Left lung (tissue), 14 donors: ENCODE measurements at regions of chr5 and their contacts with region 1.

Region 1: GRCh38 chr5:175444060-175444904 is at the start of gene DRD1:
- DNase-seq: peak in 3 of 4 donors; percentile 36 to 89 (median 51)
- ATAC-seq: peak; percentile 92
- H3K4me3 ChIP-seq: peak within 1 kb of the TSS; percentile 20 to 24
- H3K27ac ChIP-seq: no peak within 1 kb of the TSS
- H3K4me1 ChIP-seq: peaks cover 5 to 15% of the 10 kb centered on the region in 2 donors
- H3K27me3 ChIP-seq: peaks cover 22 to 96% of the 10 kb centered on the region in 2 donors
- CTCF ChIP-seq: peak; percentile 67 to 78
- polyA plus RNA-seq, gene DRD1: 0.09 to 0.35 (median 0.13) TPM

Region 2: GRCh38 chr5:174951146-174951780 is 493.0 kb before region 1 on chr5:
- intact Hi-C with region 1: loop called in 1 of 2 experiments (anchors 5 kb)
- DNase-seq: peak in 3 of 4 donors; percentile 40 to 89 (median 63)
- ATAC-seq: peak; percentile 96
- H3K4me3 ChIP-seq: no peak overlapping the region
- H3K27ac ChIP-seq: no peak overlapping the region
- H3K4me1 ChIP-seq: no peaks in the 10 kb centered on the region
- H3K27me3 ChIP-seq: peaks cover 0 to 12% of the 10 kb centered on the region in 2 donors
- CTCF ChIP-seq: peak; percentile 75 to 77

Region 3: GRCh38 chr5:175246242-175246888 is 197.9 kb before region 1 on chr5:
- intact Hi-C with region 1: no loop called
- DNase-seq: peak in 1 of 4 donors; percentile 51
- ATAC-seq: peak; percentile 83
- H3K4me3 ChIP-seq: no peak overlapping the region
- H3K27ac ChIP-seq: peak overlapping the region in 1 of 2 donors; percentile 43
- H3K4me1 ChIP-seq: peaks cover 0 to 7% of the 10 kb centered on the region in 2 donors
- H3K27me3 ChIP-seq: no peaks in the 10 kb centered on the region
- CTCF ChIP-seq: no peak

Region 4: DNA sequence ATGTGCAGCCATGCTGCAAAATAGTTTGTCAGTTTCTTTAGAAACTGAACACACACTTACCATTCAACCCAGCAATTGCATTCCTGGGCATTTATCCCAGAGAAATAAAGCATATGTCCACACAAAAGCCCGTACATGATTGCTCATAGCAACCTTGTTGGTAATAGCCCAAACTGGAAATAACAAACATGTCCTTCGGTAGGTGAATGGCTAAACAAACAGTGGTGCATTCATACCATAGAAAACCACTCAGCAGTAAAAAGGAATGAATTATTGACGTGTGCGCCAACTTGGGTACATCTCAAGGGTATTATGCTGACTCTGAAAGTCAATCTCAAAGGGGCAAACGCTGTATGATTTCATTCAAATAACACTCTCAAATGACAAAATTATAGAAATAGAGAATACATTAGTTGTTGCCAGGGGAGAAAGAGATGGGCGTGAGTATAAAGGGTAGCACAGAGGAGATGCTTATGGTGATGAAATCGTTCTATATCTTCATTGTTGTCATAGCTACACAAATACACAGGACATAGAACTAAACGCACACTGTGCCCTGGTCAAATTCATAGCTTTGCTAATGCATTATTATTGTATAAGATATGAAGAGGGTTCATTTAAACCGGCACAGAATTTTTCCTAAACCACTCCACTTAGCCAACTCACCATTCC is 58.5 kb before region 1 on chr5:
- intact Hi-C with region 1: no loop called
- DNase-seq: peak in 1 of 4 donors; percentile 41
- ATAC-seq: peak; percentile 62
- H3K4me3 ChIP-seq: no peak overlapping the region
- H3K27ac ChIP-seq: no peak overlapping the region
- H3K4me1 ChIP-seq: no peaks in the 10 kb centered on the region
- H3K27me3 ChIP-seq: no peaks in the 10 kb centered on the region
- CTCF ChIP-seq: no peak